Activated CD4-positive, alpha-beta T cell treated with anti-CD3 and anti-CD28 coated beads for 36 hours (primary cell): ENCODE measurements at regions of chr5 and their contacts with region 1.

Region 1: GRCh38 chr5:68252673-68253623 is 37.4 kb downstream of the PIK3R1 start:
- DNase-seq: peak; percentile 72
- ATAC-seq: peak; percentile 33
- H3K4me3 Mint-ChIP-seq: no peak overlapping the region
- H3K27ac Mint-ChIP-seq: no peak overlapping the region
- H3K4me1 Mint-ChIP-seq: peaks cover 94% of the 10 kb centered on the region
- H3K27me3 Mint-ChIP-seq: no peaks in the 10 kb centered on the region

Region 2: DNA sequence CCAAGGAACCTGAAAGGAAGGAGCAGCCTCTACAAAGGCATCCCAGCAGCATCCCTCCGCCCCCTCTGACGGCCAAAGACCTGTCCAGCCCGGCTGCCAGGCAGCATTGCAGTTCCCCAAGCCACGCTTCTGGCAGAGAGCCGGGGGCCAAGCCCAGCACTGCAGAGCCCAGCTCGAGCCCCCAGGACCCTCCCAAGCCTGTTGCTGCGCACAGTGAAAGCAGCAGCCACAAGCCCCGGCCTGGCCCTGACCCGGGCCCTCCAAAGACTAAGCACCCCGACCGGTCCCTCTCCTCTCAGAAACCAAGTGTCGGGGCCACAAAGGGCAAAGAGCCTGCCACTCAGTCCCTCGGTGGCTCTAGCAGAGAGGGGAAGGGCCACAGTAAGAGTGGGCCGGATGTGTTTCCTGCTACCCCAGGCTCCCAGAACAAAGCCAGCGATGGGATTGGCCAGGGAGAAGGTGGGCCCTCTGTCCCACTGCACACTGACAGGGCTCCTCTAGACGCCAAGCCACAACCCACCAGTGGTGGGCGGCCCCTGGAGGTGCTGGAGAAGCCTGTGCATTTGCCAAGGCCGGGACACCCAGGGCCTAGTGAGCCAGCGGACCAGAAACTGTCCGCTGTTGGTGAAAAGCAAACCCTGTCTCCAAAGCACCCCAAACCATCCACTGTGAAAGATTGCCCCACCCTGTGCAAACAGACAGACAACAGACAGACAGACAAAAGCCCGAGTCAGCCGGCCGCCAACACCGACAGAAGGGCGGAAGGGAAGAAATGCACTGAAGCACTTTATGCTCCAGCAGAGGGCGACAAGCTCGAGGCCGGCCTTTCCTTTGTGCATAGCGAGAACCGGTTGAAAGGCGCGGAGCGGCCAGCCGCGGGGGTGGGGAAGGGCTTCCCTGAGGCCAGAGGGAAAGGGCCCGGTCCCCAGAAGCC is 1087.2 kb before region 1 on chr5:
- CTCF ChIA-PET with region 1: no interaction called
- POLR2A ChIA-PET with region 1: no interaction called
- intact Hi-C with region 1: loop called in 1 of 2 experiments (anchors 5 kb)
- DNase-seq: peak; percentile 89
- ATAC-seq: peak; percentile 76
- H3K4me3 Mint-ChIP-seq: peak overlapping the region; percentile 74
- H3K27ac Mint-ChIP-seq: peak overlapping the region; percentile 97
- H3K4me1 Mint-ChIP-seq: peaks cover 57% of the 10 kb centered on the region
- H3K27me3 Mint-ChIP-seq: no peaks in the 10 kb centered on the region

Region 3: DNA sequence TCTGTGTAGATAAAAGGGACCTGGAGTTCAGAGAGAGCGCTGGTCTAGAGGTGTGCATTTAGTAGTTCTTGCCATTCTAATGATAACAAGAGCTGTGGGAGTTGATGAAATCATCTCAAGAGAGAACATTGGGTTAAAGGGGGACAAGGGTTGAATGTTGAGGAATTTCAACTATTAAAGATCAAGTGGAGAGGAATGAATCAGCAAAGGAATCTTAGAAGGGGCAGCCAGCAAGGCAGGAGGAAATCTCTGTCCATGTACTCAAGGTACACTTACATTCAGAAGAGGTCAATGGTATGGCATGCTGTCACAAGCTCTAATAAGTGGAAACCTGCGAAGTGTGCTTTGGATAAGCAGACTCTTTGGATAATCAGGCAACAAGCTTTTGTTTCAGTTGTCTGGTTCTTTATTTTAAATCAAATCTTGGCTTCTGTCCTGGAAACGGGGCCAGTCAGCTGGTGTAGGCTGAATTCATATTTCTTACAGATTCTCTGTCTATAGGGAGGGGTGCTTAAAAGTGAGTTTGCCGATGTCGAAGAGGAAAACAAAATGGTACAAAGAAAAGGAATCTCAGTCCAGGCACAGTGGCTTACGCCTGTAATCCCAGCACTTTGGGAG is 735.9 kb before region 1 on chr5:
- CTCF ChIA-PET with region 1: no interaction called
- POLR2A ChIA-PET with region 1: no interaction called
- intact Hi-C with region 1: loop called (anchors 10 kb)
- DNase-seq: no peak
- ATAC-seq: no peak
- H3K4me3 Mint-ChIP-seq: no peak overlapping the region
- H3K27ac Mint-ChIP-seq: no peak overlapping the region
- H3K4me1 Mint-ChIP-seq: peaks cover 59% of the 10 kb centered on the region
- H3K27me3 Mint-ChIP-seq: no peaks in the 10 kb centered on the region

Region 4: GRCh38 chr5:67971223-67971830 is 281.6 kb before region 1 on chr5:
- CTCF ChIA-PET with region 1: no interaction called
- POLR2A ChIA-PET with region 1: no interaction called
- intact Hi-C with region 1: no loop called
- DNase-seq: no peak
- ATAC-seq: no peak
- H3K4me3 Mint-ChIP-seq: no peak overlapping the region
- H3K27ac Mint-ChIP-seq: no peak overlapping the region
- H3K4me1 Mint-ChIP-seq: no peaks in the 10 kb centered on the region
- H3K27me3 Mint-ChIP-seq: no peaks in the 10 kb centered on the region

Region 5: DNA sequence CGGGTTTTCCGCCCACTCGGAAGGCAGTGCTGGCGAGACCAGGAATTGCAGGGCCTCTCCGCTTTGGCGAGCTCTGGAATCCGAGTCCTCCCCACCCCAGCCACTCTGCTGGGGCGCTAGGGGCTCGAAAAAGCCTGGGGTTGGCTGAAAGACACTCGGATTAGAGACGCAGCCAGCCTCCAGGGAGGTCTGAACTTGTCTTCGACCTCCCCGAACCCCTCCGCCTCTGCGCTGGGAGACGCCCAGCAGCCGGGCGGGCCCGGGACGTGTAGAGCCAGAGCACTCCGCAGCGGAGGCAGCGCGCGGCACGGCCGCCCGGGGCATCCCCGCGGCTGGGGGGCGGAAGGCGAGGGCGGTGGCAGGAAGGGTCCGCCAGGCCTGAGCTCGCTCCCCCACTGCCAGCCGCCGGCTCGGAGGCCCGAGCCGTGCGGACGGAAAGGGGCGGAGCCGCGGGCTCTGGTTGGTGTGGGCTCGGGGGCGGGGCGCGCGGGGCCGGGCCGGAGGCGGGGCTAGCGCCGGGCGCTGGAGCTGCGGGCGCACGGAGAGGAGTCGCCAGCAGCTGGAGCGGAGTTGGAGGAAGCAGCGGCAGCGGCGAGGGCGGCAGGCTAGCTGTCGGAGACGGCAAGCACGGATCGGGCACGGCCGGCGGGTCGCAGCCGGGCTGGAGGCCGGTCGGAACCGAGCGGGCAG is 37.6 kb before region 1 on chr5 and contains the start of gene PIK3R1:
- CTCF ChIA-PET with region 1: interaction called, 38 read pairs
- POLR2A ChIA-PET with region 1: interaction called, 5 read pairs
- intact Hi-C with region 1: loop called (anchors 2 to 5 kb)
- DNase-seq: peak; percentile 96
- ATAC-seq: peak; percentile 85
- H3K4me3 Mint-ChIP-seq: peak within 1 kb of the TSS; percentile 83
- H3K27ac Mint-ChIP-seq: peak within 1 kb of the TSS; percentile 97
- H3K4me1 Mint-ChIP-seq: peaks cover 45% of the 10 kb centered on the region
- H3K27me3 Mint-ChIP-seq: no peaks in the 10 kb centered on the region
- total RNA-seq, gene PIK3R1: 40.0 to 49.0 TPM

Region 6: GRCh38 chr5:68272289-68272688 is 19.3 kb after region 1 on chr5:
- CTCF ChIA-PET with region 1: interaction called, 40 read pairs
- POLR2A ChIA-PET with region 1: interaction called, 6 read pairs
- intact Hi-C with region 1: loop called in 1 of 2 experiments (anchors 2 kb)
- DNase-seq: no peak
- ATAC-seq: no peak
- H3K4me3 Mint-ChIP-seq: no peak overlapping the region
- H3K27ac Mint-ChIP-seq: no peak overlapping the region
- H3K4me1 Mint-ChIP-seq: peaks cover 81% of the 10 kb centered on the region
- H3K27me3 Mint-ChIP-seq: no peaks in the 10 kb centered on the region